Right lobe of liver (tissue), 6 donors: ENCODE measurements at regions of chr5 and their contacts with region 1.

Region 1: GRCh38 chr5:173625696-173626504 is 9.4 kb upstream of the BOD1 start:
- DNase-seq: no peak
- ATAC-seq: no peak
- H3K4me3 ChIP-seq: no peak overlapping the region
- H3K27ac ChIP-seq: no peak overlapping the region
- H3K4me1 ChIP-seq: peaks cover 0 to 23% (median 8%) of the 10 kb centered on the region in 4 donors
- H3K27me3 ChIP-seq: no peaks in the 10 kb centered on the region
- CTCF ChIP-seq: no peak
- POLR2A ChIP-seq: no peak

Region 2: GRCh38 chr5:173823711-173824528 is 198.0 kb after region 1 on chr5:
- intact Hi-C with region 1: loop called in 1 of 2 experiments (anchors 10 kb)
- DNase-seq: peak; percentile 78 to 91 (median 87)
- ATAC-seq: peak; percentile 78 to 88 (median 82)
- H3K4me3 ChIP-seq: no peak overlapping the region
- H3K27ac ChIP-seq: peak overlapping the region; percentile 28 to 89 (median 68)
- H3K4me1 ChIP-seq: peaks cover 0 to 49% (median 17%) of the 10 kb centered on the region in 4 donors
- H3K27me3 ChIP-seq: no peaks in the 10 kb centered on the region
- CTCF ChIP-seq: peak in 1 of 4 donors; percentile 6
- POLR2A ChIP-seq: peak; percentile 59

Region 3: GRCh38 chr5:173972925-173973615 is 347.2 kb after region 1 on chr5:
- intact Hi-C with region 1: loop called (anchors 5 kb)
- DNase-seq: peak; percentile 74 to 85 (median 78)
- ATAC-seq: peak; percentile 88 to 97 (median 94)
- H3K4me3 ChIP-seq: peak overlapping the region; percentile 37 to 57 (median 47)
- H3K27ac ChIP-seq: peak overlapping the region in 2 of 3 donors; percentile 33 to 44
- H3K4me1 ChIP-seq: peaks cover 0 to 20% (median 3%) of the 10 kb centered on the region in 4 donors
- H3K27me3 ChIP-seq: no peaks in the 10 kb centered on the region
- CTCF ChIP-seq: peak; percentile 78 to 95 (median 84)
- POLR2A ChIP-seq: peak; percentile 17